HepG2 (cell line): ENCODE measurements at regions of chr5 and their contacts with region 1.

Region 1: DNA sequence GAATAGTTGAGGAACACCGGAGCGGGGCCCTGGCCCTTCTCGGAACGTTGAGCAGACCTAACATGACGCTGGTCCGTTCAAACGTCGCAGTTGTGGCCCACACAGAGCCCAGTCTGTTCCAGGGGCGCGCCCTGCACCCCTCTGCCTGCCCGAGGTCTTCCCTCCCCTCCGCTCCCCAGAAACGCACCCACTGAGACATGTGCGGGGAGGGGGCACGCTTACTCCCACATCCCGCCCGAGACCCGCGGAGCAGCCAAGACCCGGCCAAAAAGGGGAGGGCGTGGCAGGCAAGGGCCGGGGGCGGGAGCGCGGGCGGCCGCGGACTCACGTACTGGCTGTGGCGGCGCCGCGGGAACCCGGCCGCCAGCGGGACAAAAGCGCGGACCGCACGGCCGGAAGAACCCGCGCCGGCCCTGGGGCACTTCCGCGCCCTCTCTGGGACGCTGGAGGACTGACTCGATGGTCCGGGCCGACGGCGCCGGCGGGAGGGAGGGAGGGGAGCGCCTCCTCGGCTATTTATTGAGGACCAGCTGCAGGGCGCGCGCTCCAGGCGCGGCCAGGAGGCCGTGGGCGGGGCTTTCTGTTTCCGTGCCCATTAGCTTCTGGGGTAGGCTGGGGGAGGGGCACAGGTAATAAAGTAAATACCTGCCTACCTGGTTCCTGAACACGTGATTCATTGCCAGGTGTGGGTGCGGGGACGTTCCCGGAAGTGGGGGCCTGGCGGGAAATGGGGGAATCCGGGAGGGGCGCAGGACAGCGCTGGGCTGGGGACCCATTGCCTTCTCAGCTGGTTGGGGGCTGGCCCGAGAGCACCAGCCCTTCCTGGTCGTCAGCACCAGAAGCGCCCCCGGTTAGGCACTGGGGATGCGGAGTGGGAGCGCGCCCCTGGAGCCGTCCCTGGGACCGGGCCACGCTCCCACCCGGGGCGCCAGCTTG is at the start of gene ZFP62:
- DNase-seq: peak; percentile 77
- ATAC-seq: peak; percentile 99
- H3K4me3 ChIP-seq: peak within 1 kb of the TSS; percentile 93 to 99 (median 93)
- H3K27ac ChIP-seq: peak within 1 kb of the TSS; percentile 80
- H3K4me1 ChIP-seq: peaks cover 7% of the 10 kb centered on the region
- H3K27me3 ChIP-seq: no peaks in the 10 kb centered on the region; a peak in 1 of 5 replicates
- CTCF ChIP-seq: peak; percentile 4; the same call in 1 of the 2 replicates
- EP300 ChIP-seq: no peak
- POLR2A ChIP-seq: peak in 1 of 2 experiments; percentile 68; a peak in 1 of 4 replicates
- RAD21 ChIP-seq: no peak
- total RNA-seq, gene ZFP62: 18.9 and 19.4 TPM in 2 replicates

Region 2: DNA sequence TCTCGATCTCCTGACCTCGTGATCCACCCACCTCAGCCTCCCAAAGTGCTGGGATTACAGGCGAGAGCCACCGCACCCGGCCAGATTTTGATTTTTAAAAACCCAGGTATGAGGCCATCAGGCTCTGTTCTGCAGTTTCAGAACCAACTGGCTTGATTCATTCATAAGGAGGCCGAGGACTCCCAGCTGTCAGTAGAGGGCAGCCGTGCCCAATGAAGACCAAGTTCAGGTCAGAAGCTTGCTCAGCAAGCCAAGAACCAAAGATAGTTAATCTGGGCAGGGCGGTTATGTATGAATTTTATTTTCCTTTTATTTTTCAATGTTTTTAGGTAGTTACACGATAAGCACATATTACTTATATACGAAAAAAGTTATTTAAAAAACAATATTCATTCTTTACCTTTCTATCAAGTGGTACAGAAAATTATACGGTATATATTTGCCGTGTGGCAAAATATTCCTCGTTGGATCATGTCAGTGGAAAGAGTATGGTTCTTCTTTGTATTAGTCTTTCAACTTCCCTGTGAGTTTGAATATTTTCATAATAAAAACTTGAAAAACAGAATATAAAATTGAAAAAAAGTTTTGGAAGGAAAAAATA is 76.6 kb before region 1 on chr5:
- CTCF ChIA-PET with region 1: interaction called, 3 read pairs
- POLR2A ChIA-PET with region 1: no interaction called
- in situ Hi-C with region 1: no loop called
- intact Hi-C with region 1: loop called (anchors 5 kb)
- DNase-seq: peak; percentile 70
- ATAC-seq: peak; percentile 60
- H3K4me3 ChIP-seq: no peak overlapping the region
- H3K27ac ChIP-seq: no peak overlapping the region
- H3K4me1 ChIP-seq: peaks cover 12% of the 10 kb centered on the region
- H3K27me3 ChIP-seq: peaks cover 0 to 10% of the 10 kb centered on the region in 2 experiments; a peak in 1 of 5 replicates
- CTCF ChIP-seq: peak; percentile 87
- EP300 ChIP-seq: no peak
- POLR2A ChIP-seq: no peak
- RAD21 ChIP-seq: peak; percentile 68

Region 3: GRCh38 chr5:180810210-180810958 is 50.8 kb before region 1 on chr5:
- CTCF ChIA-PET with region 1: no interaction called
- POLR2A ChIA-PET with region 1: interaction called, 6 read pairs
- in situ Hi-C with region 1: no loop called
- intact Hi-C with region 1: loop called (anchors 5 kb)
- DNase-seq: peak; percentile 83
- ATAC-seq: peak; percentile 81
- H3K4me3 ChIP-seq: peak overlapping the region; percentile 57 to 79 (median 72); a peak in 5 of 6 replicates
- H3K27ac ChIP-seq: peak overlapping the region; percentile 100
- H3K4me1 ChIP-seq: peaks cover 52% of the 10 kb centered on the region
- H3K27me3 ChIP-seq: no peaks in the 10 kb centered on the region; a peak in 1 of 5 replicates
- CTCF ChIP-seq: no peak
- EP300 ChIP-seq: no peak
- POLR2A ChIP-seq: peak in 1 of 2 experiments; percentile 59; a peak in 2 of 4 replicates
- RAD21 ChIP-seq: no peak

Region 4: DNA sequence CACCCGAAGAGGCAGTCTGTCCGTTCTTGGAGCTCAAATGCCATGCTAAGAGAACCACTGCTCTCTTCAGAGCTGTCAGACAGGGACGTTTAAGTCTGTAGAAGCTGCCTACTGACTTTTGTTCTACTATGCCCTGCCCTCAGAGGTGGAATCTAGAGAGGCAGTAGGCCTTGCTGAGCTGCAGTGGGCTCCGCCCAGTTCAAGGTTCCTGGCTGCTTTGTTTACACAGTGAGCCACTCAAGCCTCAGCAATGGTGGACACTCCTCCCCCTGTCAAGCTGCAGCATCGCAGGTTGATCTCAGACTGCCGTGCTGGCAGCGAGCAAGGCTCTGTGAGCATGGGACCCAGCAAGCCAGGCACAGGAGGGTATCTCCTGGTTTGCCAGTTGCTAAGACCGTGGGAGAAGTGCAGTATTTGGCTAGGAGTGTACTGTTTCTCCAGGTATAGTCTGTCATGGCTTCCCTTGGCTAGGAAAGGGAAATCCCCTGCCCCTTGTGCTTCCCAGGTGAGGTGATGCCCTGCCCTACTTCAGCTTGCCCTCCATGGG is 24.8 kb after region 1 on chr5:
- CTCF ChIA-PET with region 1: no interaction called
- POLR2A ChIA-PET with region 1: interaction called, 3 read pairs
- in situ Hi-C with region 1: no loop called
- intact Hi-C with region 1: loop called (anchors 2 kb)
- DNase-seq: peak; percentile 90
- ATAC-seq: peak; percentile 100
- H3K4me3 ChIP-seq: peak overlapping the region in 1 of 3 experiments; percentile 50; a peak in 2 of 6 replicates
- H3K27ac ChIP-seq: peak overlapping the region; percentile 32
- H3K4me1 ChIP-seq: peaks cover 21% of the 10 kb centered on the region
- H3K27me3 ChIP-seq: no peaks in the 10 kb centered on the region
- CTCF ChIP-seq: peak; percentile 49
- EP300 ChIP-seq: peak in 1 of 2 experiments; percentile 55; a peak in 2 of 4 replicates
- POLR2A ChIP-seq: no peak
- RAD21 ChIP-seq: peak; percentile 45; the same call in 1 of the 2 replicates

Region 5: DNA sequence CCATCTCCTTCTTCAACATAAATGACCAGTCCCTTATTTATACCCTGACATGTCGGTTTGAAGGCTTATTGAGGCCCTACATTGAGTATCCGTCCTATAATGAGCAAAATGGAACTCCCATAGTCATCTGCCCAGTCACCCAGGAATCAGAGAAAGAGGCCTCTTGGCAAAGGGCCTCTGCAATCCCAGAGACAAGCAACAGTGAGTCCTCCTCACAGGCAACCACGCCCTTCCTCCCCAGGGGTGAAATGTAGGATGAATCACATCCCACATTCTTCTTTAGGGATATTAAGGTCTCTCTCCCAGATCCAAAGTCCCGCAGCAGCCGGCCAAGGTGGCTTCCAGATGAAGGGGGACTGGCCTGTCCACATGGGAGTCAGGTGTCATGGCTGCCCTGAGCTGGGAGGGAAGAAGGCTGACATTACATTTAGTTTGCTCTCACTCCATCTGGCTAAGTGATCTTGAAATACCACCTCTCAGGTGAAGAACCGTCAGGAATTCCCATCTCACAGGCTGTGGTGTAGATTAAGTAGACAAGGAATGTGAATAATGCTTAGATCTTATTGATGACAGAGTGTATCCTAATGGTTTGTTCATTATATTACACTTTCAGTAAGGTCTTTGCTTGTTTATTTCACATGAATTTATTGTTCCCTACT is 89.3 kb after region 1 on chr5:
- CTCF ChIA-PET with region 1: no interaction called
- POLR2A ChIA-PET with region 1: no interaction called
- in situ Hi-C with region 1: no loop called
- intact Hi-C with region 1: no loop called
- DNase-seq: no peak
- ATAC-seq: no peak
- H3K4me3 ChIP-seq: no peak overlapping the region
- H3K27ac ChIP-seq: no peak overlapping the region
- H3K4me1 ChIP-seq: no peaks in the 10 kb centered on the region
- H3K27me3 ChIP-seq: no peaks in the 10 kb centered on the region
- CTCF ChIP-seq: no peak
- EP300 ChIP-seq: no peak
- POLR2A ChIP-seq: no peak
- RAD21 ChIP-seq: no peak

Region 6: DNA sequence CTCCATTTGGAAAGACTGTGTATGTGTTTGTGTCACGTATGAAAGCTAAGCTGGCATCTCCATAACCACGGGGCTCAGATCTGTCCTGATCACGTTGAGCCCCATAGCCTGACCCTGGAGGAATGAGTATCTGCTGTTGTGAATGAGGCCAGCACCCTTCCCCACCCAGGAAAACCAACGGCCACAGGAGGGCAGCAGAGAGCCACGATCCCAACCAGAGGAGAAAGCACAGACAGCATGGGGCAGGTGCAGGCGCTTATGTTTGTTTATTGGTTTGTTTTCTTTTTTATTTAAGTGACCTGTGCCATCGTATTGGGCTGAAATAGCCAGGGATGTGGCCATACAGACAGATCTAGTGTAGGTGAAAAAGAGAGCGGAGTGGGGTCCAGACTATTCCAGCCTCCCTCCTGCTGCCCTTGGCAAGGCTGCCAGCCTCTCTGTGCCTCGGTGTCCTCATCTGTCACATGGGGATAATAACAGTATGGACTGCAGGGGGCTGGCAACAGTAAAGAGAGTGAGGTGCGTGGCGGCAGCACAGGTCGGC is 298.2 kb after region 1 on chr5:
- CTCF ChIA-PET with region 1: no interaction called
- POLR2A ChIA-PET with region 1: no interaction called
- in situ Hi-C with region 1: no loop called
- intact Hi-C with region 1: loop called (anchors 10 kb)
- DNase-seq: peak; percentile 67
- ATAC-seq: peak; percentile 93
- H3K4me3 ChIP-seq: peak overlapping the region in 1 of 3 experiments; percentile 62; a peak in 1 of 6 replicates
- H3K27ac ChIP-seq: no peak overlapping the region
- H3K4me1 ChIP-seq: peaks cover 32% of the 10 kb centered on the region
- H3K27me3 ChIP-seq: peaks cover 0 to 11% of the 10 kb centered on the region in 2 experiments; a peak in 2 of 5 replicates
- CTCF ChIP-seq: peak; percentile 90
- EP300 ChIP-seq: no peak
- POLR2A ChIP-seq: no peak
- RAD21 ChIP-seq: peak; percentile 67